T-cell (primary cell): ENCODE measurements at regions of chr2 and their contacts with region 1.

Region 1: DNA sequence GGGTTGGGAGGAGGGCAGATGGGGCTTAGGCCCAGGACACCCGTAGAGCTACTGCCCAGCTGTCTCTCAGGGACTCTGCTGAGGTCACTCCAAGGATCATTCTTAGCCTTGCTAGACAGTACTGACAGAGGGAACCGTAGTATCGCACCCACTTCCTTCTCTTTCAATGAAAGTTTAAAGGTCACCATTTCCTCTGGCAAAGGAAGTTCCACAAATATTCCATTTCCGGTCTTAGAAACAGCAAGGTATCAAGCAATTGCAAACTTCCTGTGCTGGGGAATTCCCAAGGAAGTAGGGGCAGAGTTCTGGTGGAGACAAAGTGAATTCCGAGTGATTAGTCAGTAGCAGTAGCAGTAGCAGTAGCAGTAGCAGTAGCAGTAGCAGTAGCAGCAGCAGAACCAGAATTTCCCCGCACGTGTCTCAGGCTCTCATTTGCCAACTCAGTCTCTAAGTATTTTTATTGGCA is 24.7 kb downstream of the IL1B start:
- DNase-seq: peak in 1 of 35 experiments; percentile 20
- ATAC-seq: peak in 2 of 4 experiments; percentile 15 to 39
- H3K4me3 ChIP-seq: no peak overlapping the region
- H3K4me3 Mint-ChIP-seq: no peak overlapping the region
- H3K27ac ChIP-seq: no peak overlapping the region
- H3K27ac Mint-ChIP-seq: peak overlapping the region in 1 of 2 donors; percentile 46
- H3K4me1 ChIP-seq: peaks cover 2 to 16% of the 10 kb centered on the region in 2 experiments
- H3K4me1 Mint-ChIP-seq: peaks cover 17 to 20% (median 18%) of the 10 kb centered on the region in 3 donors
- H3K27me3 ChIP-seq: no peaks in the 10 kb centered on the region
- H3K27me3 Mint-ChIP-seq: no peaks in the 10 kb centered on the region

Region 2: GRCh38 chr2:112733456-112733855 is 78.4 kb before region 1 on chr2:
- CTCF ChIA-PET with region 1: no interaction called
- POLR2A ChIA-PET with region 1: no interaction called
- DNase-seq: no peak
- ATAC-seq: no peak
- H3K4me3 ChIP-seq: no peak overlapping the region
- H3K4me3 Mint-ChIP-seq: no peak overlapping the region
- H3K27ac ChIP-seq: no peak overlapping the region
- H3K27ac Mint-ChIP-seq: no peak overlapping the region
- H3K4me1 ChIP-seq: no peaks in the 10 kb centered on the region
- H3K4me1 Mint-ChIP-seq: no peaks in the 10 kb centered on the region
- H3K27me3 ChIP-seq: peaks cover 0 to 7% of the 10 kb centered on the region in 2 experiments
- H3K27me3 Mint-ChIP-seq: no peaks in the 10 kb centered on the region

Region 3: DNA sequence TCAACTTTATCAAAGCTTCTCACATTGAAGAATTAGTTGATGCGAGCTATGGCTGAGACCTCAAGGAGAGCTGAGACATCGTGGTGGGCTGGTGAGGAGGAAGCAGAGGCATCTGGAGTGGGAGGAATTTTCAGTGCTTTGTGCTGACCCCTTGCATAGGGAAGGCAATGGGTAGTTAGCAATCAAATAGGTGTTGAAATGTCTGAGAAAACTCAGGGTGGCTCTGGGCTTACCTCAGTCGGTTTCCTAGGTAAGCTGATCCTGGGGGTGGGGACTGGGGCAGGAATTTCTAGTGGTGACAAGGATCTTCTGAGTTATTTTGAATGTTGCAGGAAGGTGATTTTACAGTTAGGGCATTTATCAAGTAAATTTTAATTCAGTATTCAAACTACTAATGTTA is 1609.9 kb after region 1 on chr2:
- CTCF ChIA-PET with region 1: no interaction called
- POLR2A ChIA-PET with region 1: interaction called in 1 of 2 experiments, 13 read pairs
- DNase-seq: no peak
- ATAC-seq: no peak
- H3K4me3 ChIP-seq: no peak overlapping the region
- H3K4me3 Mint-ChIP-seq: no peak overlapping the region
- H3K27ac ChIP-seq: no peak overlapping the region
- H3K27ac Mint-ChIP-seq: no peak overlapping the region
- H3K4me1 ChIP-seq: no peaks in the 10 kb centered on the region
- H3K4me1 Mint-ChIP-seq: no peaks in the 10 kb centered on the region
- H3K27me3 ChIP-seq: no peaks in the 10 kb centered on the region
- H3K27me3 Mint-ChIP-seq: peaks cover 4 to 8% of the 10 kb centered on the region in 2 donors